ENCODE measurements at regions of chr3 and their contacts with region 1.

Region 1: GRCh38 chr3:150216041-150216811 is 191.9 kb upstream of the TSC22D2 start:
- DNase-seq: peak; percentile 29 to 68
- ATAC-seq: peak; percentile 78 to 92
- H3K4me3 ChIP-seq: no peak overlapping the region
- H3K27ac ChIP-seq: peak overlapping the region; percentile 66 to 77 (median 73)
- H3K4me1 ChIP-seq: peaks cover 13 to 17% of the 10 kb centered on the region in 2 donors
- H3K27me3 ChIP-seq: no peaks in the 10 kb centered on the region
- CTCF ChIP-seq: no peak
- POLR2A ChIP-seq: no peak

Region 2: DNA sequence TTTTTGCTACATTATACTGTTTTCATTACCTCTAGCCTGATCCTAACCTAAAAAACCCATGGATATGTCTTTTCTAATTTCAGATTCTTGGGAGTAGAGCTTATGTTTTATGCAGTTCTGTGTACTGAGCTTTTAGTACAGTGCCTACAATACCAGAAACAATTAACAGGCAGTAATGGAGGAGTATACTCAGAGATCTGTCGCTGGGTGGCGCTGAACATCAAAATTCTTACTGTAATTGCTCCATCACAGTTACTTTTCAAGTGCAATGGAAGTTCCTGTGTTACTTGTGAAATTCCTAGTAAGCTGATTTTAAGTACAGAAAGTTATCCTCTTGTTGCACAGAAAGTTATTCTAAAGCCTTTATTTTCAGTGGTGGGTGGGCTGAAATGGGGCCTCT is 336.4 kb before region 1 on chr3:
- in situ Hi-C with region 1: no loop called
- intact Hi-C with region 1: loop called (anchors 5 kb)
- DNase-seq: peak; percentile 32 to 42
- ATAC-seq: peak; percentile 87 to 92
- H3K4me3 ChIP-seq: no peak overlapping the region
- H3K27ac ChIP-seq: peak overlapping the region in 1 of 4 donors; percentile 7
- H3K4me1 ChIP-seq: peaks cover 11 to 14% of the 10 kb centered on the region in 2 donors
- H3K27me3 ChIP-seq: no peaks in the 10 kb centered on the region
- CTCF ChIP-seq: peak; percentile 26 to 62 (median 47)
- POLR2A ChIP-seq: no peak

Region 3: GRCh38 chr3:149936812-149937233 is 279.4 kb before region 1 on chr3:
- in situ Hi-C with region 1: no loop called
- intact Hi-C with region 1: loop called (anchors 1 kb)
- DNase-seq: peak; percentile 33 to 47
- ATAC-seq: peak; percentile 82 to 87
- H3K4me3 ChIP-seq: no peak overlapping the region
- H3K27ac ChIP-seq: peak overlapping the region in 3 of 4 donors; percentile 11 to 28 (median 17)
- H3K4me1 ChIP-seq: peaks cover 15 to 17% of the 10 kb centered on the region in 2 donors
- H3K27me3 ChIP-seq: no peaks in the 10 kb centered on the region
- CTCF ChIP-seq: peak; percentile 63 to 85 (median 71)
- POLR2A ChIP-seq: no peak

Measured in gastrocnemius medialis (tissue), 4 donors.